IMR-90 (cell line): ENCODE measurements at regions of chr16 and their contacts with region 1.

Region 1: GRCh38 chr16:27235055-27235937 is 32.0 kb downstream of the KDM8 start:
- DNase-seq: peak; percentile 85
- ATAC-seq: peak; percentile 89
- H3K4me3 ChIP-seq: no peak overlapping the region
- H3K27ac ChIP-seq: peak overlapping the region; percentile 78
- H3K4me1 ChIP-seq: peaks cover 18% of the 10 kb centered on the region
- H3K27me3 ChIP-seq: no peaks in the 10 kb centered on the region
- CTCF ChIP-seq: peak; percentile 92
- POLR2A ChIP-seq: no peak
- RAD21 ChIP-seq: peak; percentile 92

Region 2: DNA sequence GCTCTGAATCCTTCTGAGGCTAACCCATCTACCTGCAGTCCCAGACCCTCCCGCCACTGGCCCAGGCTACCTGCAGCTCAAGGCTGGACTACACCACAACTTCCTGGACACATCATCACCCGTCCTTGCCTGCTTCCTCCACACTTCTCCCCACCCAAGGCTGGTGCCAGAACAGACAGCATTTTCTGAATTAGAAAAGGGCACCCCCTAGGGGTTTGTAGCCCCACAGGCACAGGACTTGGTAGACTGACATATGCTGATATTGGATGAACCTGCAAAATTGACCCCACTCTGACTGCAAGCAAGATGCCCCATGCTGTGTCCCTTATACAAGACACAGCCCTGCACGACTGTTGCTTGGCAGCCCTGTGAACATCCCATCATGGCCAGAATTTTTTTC is 440.1 kb before region 1 on chr16:
- CTCF ChIA-PET with region 1: no interaction called
- POLR2A ChIA-PET with region 1: no interaction called
- dilution Hi-C with region 1: no loop called
- in situ Hi-C with region 1: no loop called
- intact Hi-C with region 1: no loop called
- DNase-seq: no peak
- ATAC-seq: no peak
- H3K4me3 ChIP-seq: no peak overlapping the region
- H3K27ac ChIP-seq: no peak overlapping the region
- H3K4me1 ChIP-seq: no peaks in the 10 kb centered on the region
- H3K27me3 ChIP-seq: no peaks in the 10 kb centered on the region
- CTCF ChIP-seq: no peak
- POLR2A ChIP-seq: no peak
- RAD21 ChIP-seq: no peak

Region 3: DNA sequence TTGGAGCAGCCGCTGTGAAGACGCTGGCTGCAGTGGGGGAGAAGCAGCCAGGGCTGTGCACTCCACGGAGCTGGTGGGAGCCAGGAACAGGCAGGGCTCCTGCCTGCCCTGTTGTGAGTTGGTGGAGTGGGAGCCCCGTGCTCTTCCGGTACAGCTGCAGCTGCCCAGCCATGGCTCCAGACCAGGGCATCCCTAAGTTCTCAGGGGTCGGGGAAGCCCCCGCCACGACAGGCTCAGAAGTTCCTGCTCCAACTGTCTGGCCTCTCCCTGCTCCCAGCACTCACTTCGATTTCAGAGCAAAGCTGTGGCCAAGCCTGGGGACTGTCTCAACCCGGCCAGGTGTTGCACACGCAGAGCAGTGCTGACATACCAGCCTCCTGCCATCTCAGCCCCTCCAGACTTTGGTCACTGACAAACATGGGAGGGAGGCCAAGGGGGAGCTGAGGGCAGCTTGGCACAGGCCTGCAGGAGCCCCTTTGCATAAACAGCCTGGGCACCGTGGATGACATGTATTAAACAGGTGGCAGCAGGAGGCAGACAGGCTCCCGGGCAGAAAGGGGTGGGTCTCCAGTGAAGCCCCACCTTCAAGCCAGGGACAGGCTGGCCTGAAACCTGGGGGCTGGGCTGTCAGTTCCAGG is 45.8 kb before region 1 on chr16:
- CTCF ChIA-PET with region 1: no interaction called
- POLR2A ChIA-PET with region 1: no interaction called
- dilution Hi-C with region 1: no loop called
- in situ Hi-C with region 1: no loop called
- intact Hi-C with region 1: no loop called
- DNase-seq: no peak
- ATAC-seq: no peak
- H3K4me3 ChIP-seq: no peak overlapping the region
- H3K27ac ChIP-seq: no peak overlapping the region
- H3K4me1 ChIP-seq: no peaks in the 10 kb centered on the region
- H3K27me3 ChIP-seq: peaks cover 15% of the 10 kb centered on the region
- CTCF ChIP-seq: no peak
- POLR2A ChIP-seq: no peak
- RAD21 ChIP-seq: no peak

Region 4: GRCh38 chr16:27313422-27314160 is 78.3 kb after region 1 on chr16 and contains the start of gene IL4R:
- CTCF ChIA-PET with region 1: interaction called, 4 read pairs
- POLR2A ChIA-PET with region 1: no interaction called
- dilution Hi-C with region 1: no loop called
- in situ Hi-C with region 1: loop called (anchors 5 kb)
- intact Hi-C with region 1: loop called (anchors 2 kb)
- DNase-seq: peak; percentile 77
- ATAC-seq: peak; percentile 75
- H3K4me3 ChIP-seq: peak within 1 kb of the TSS; percentile 74
- H3K27ac ChIP-seq: peak within 1 kb of the TSS; percentile 95
- H3K4me1 ChIP-seq: peaks cover 26% of the 10 kb centered on the region
- H3K27me3 ChIP-seq: no peaks in the 10 kb centered on the region
- CTCF ChIP-seq: no peak
- POLR2A ChIP-seq: peak; percentile 65
- RAD21 ChIP-seq: peak; percentile 24
- total RNA-seq, gene IL4R: 6.3 and 8.3 TPM in 2 replicates

Region 5: DNA sequence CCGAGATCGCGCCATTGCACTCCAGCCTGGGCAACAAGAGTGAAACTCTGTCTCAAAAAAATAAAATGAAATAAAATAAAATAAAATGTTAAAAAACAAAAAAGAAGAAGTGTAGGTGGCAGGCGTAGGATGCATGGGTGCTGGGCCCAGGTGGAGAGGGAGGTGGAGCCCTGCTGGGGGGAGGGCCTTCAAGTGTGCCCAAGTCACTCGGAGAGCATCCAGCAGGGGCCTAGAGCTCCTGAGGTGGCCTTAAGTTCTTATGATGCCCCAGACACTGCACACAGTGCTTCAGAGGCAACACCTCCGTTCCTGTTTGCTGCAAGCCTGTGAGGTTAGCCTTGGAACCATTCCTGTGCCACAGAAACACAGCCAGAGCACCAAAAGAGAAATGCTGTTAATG is 101.7 kb after region 1 on chr16:
- CTCF ChIA-PET with region 1: no interaction called
- POLR2A ChIA-PET with region 1: no interaction called
- dilution Hi-C with region 1: no loop called
- in situ Hi-C with region 1: no loop called
- intact Hi-C with region 1: no loop called
- DNase-seq: no peak
- ATAC-seq: no peak
- H3K4me3 ChIP-seq: no peak overlapping the region
- H3K27ac ChIP-seq: peak overlapping the region; percentile 30
- H3K4me1 ChIP-seq: peaks cover 18% of the 10 kb centered on the region
- H3K27me3 ChIP-seq: no peaks in the 10 kb centered on the region
- CTCF ChIP-seq: no peak
- POLR2A ChIP-seq: no peak
- RAD21 ChIP-seq: no peak

Region 6: GRCh38 chr16:27367461-27368357 is 132.4 kb after region 1 on chr16:
- CTCF ChIA-PET with region 1: interaction called, 24 read pairs
- POLR2A ChIA-PET with region 1: interaction called, 8 read pairs
- dilution Hi-C with region 1: no loop called
- in situ Hi-C with region 1: loop called (anchors 5 kb)
- intact Hi-C with region 1: loop called (anchors 1 kb)
- DNase-seq: peak; percentile 63
- ATAC-seq: peak; percentile 88
- H3K4me3 ChIP-seq: no peak overlapping the region
- H3K27ac ChIP-seq: no peak overlapping the region; the same call in 1 of the 2 replicates
- H3K4me1 ChIP-seq: peaks cover 13% of the 10 kb centered on the region
- H3K27me3 ChIP-seq: no peaks in the 10 kb centered on the region
- CTCF ChIP-seq: peak; percentile 80
- POLR2A ChIP-seq: no peak
- RAD21 ChIP-seq: peak; percentile 95

Region 7: GRCh38 chr16:27449434-27450195 is 214.3 kb after region 1 on chr16:
- CTCF ChIA-PET with region 1: interaction called, 4 read pairs
- POLR2A ChIA-PET with region 1: no interaction called
- dilution Hi-C with region 1: no loop called
- in situ Hi-C with region 1: loop called (anchors 5 kb)
- intact Hi-C with region 1: no loop called
- DNase-seq: no peak
- ATAC-seq: no peak
- H3K4me3 ChIP-seq: no peak overlapping the region
- H3K27ac ChIP-seq: no peak overlapping the region
- H3K4me1 ChIP-seq: peaks cover 5% of the 10 kb centered on the region
- H3K27me3 ChIP-seq: no peaks in the 10 kb centered on the region
- CTCF ChIP-seq: no peak
- POLR2A ChIP-seq: no peak
- RAD21 ChIP-seq: no peak